RWPE1 (cell line): ENCODE measurements at regions of chr3 and their contacts with region 1.

Region 1: GRCh38 chr3:184085389-184085852 is 11.4 kb upstream of the HTR3E start:
- DNase-seq: peak; percentile 75
- H3K27ac ChIP-seq: no peak overlapping the region
- CTCF ChIP-seq: no peak

Region 2: GRCh38 chr3:184017672-184018423 is 67.6 kb before region 1 on chr3 and contains the start of gene ABCC5:
- CTCF ChIA-PET with region 1: interaction called, 14 read pairs
- POLR2A ChIA-PET with region 1: no interaction called
- DNase-seq: peak; percentile 94
- H3K27ac ChIP-seq: peak within 1 kb of the TSS; percentile 76
- CTCF ChIP-seq: peak; percentile 77

Region 3: DNA sequence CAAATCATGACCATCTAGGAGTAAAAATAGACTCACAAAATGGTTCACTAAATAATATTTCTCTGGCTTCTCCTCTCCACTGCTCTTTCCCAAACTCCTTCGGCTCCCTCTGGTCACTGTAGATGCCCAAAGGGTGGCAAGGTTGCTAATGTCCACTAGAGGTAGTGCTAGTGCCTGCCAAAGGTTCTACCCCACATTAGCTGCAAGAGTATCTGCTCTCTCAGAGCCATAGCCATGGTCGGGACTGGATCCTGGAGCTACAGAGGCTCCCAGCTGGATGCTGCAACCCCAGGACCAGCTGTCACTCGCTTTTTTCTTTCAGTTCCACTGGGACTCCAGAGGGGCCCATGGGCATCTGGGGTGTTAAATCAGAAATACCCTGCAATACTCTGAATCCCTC is 45.4 kb before region 1 on chr3:
- CTCF ChIA-PET with region 1: no interaction called
- POLR2A ChIA-PET with region 1: no interaction called
- DNase-seq: no peak
- H3K27ac ChIP-seq: peak overlapping the region; percentile 38; the same call in 1 of the 2 replicates
- CTCF ChIP-seq: no peak

Region 4: GRCh38 chr3:184110316-184110725 is 24.9 kb after region 1 on chr3:
- CTCF ChIA-PET with region 1: no interaction called
- POLR2A ChIA-PET with region 1: no interaction called
- DNase-seq: no peak
- H3K27ac ChIP-seq: no peak overlapping the region
- CTCF ChIP-seq: no peak

Region 5: GRCh38 chr3:184171562-184172287 is 86.3 kb after region 1 on chr3:
- CTCF ChIA-PET with region 1: no interaction called
- POLR2A ChIA-PET with region 1: no interaction called
- DNase-seq: peak; percentile 78
- H3K27ac ChIP-seq: peak overlapping the region; percentile 29
- CTCF ChIP-seq: no peak